Activated CD4-positive, alpha-beta memory T cell treated with anti-CD3 and anti-CD28 coated beads for 36 hours (primary cell): ENCODE measurements at regions of chr1 and their contacts with region 1.

Region 1: DNA sequence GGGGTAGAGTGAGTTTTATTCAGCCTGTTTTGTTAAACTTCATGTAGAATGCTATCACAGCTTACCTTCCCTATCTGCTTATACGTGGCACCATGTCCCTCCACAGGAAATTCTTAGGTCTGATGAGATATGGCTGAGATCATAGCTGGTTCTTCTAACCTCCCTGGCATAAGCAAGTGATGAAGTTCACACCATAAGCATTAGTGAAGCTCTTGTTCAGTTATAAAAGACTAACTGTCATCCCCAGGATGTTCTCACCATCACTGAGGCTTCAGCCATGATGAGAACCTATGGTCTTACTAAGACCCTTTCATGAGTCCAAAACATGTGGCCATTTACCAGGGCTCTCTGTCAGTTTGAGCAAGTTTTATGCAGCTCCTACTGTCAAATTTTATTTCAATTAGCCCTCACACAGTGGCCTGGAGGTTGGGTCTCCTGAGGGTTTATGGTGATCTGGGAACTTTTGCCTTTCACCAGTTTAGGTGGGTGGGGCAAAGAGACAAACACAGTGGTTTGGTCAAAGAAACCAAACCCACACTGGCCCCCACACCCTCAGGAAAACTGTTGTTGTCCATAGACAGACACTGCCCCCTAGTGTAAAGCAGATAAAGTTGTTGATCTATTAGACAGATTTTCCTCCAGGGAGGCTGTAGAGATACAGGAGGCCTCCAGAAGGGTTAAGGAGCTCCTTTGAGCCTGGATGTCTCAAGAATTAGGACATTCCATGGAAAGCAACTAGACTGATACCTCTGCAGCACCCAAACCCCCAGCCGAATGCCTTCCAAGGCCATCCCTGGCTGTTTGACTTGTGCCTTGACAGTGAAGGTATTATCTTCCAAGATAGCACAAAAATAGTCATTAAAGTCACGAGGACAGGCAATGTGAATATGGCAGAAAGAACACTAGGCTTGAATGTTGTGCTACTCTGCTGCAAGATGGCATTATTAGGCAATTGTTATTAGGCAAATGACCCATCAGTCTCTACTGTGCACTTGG is 5.0 kb downstream of the SLC22A15 start:
- DNase-seq: no peak
- H3K4me3 Mint-ChIP-seq: no peak overlapping the region
- H3K27ac Mint-ChIP-seq: no peak overlapping the region
- H3K4me1 Mint-ChIP-seq: no peaks in the 10 kb centered on the region
- H3K27me3 Mint-ChIP-seq: peaks cover 12% of the 10 kb centered on the region

Region 2: GRCh38 chr1:115717541-115717940 is 263.8 kb before region 1 on chr1:
- CTCF ChIA-PET with region 1: no interaction called
- POLR2A ChIA-PET with region 1: no interaction called
- intact Hi-C with region 1: loop called (anchors 1 kb)
- DNase-seq: peak; percentile 41
- H3K4me3 Mint-ChIP-seq: no peak overlapping the region
- H3K27ac Mint-ChIP-seq: no peak overlapping the region
- H3K4me1 Mint-ChIP-seq: no peaks in the 10 kb centered on the region
- H3K27me3 Mint-ChIP-seq: peaks cover 7% of the 10 kb centered on the region

Region 3: DNA sequence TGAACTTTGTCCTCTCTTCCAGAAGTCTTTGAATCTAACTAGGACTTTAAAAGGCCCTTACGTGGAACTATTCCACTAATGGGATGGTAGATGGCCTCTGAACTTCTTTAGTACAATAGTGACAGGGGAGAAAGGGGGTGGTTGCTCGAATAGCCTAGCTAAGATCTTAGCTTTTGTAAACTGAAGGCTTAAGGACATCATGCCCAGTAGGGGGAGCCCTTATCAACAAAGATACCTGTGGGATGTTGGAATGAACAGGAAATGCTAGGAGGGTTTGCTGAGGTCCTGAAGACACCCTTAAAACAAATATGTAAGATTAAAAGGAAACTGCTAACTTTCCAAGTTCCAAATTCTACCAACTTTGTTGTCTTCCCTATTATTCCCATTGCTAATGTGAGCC is 173.6 kb before region 1 on chr1:
- CTCF ChIA-PET with region 1: interaction called, 12 read pairs
- POLR2A ChIA-PET with region 1: no interaction called
- intact Hi-C with region 1: loop called (anchors 1 kb)
- DNase-seq: peak; percentile 38
- H3K4me3 Mint-ChIP-seq: no peak overlapping the region
- H3K27ac Mint-ChIP-seq: no peak overlapping the region
- H3K4me1 Mint-ChIP-seq: no peaks in the 10 kb centered on the region
- H3K27me3 Mint-ChIP-seq: peaks cover 11% of the 10 kb centered on the region

Region 4: DNA sequence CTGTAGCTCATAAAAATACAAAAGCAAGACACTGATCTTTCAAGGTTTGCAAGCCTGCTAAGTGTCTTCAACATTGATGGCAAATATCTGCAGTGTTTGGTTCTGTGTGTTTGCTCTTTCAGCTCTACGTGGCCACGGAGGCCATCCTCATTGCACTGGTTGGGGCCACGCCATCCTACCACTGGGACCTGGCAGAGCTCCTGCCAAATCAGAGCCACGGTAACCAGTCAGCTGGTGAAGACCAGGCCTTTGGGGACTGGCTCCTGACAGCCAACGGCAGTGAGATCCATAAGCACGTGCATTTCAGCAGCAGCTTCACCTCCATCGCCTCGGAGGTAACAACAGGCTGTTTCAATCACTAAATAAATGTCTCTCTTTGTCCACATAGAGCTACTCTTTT is 10.6 kb after region 1 on chr1:
- CTCF ChIA-PET with region 1: interaction called, 10 read pairs
- POLR2A ChIA-PET with region 1: no interaction called
- intact Hi-C with region 1: no loop called
- DNase-seq: no peak
- H3K4me3 Mint-ChIP-seq: no peak overlapping the region
- H3K27ac Mint-ChIP-seq: no peak overlapping the region
- H3K4me1 Mint-ChIP-seq: peaks cover 2% of the 10 kb centered on the region
- H3K27me3 Mint-ChIP-seq: no peaks in the 10 kb centered on the region